ENCODE measurements at regions of chr13 and their contacts with region 1.

Region 1: GRCh38 chr13:95185851-95186250 is 115.4 kb downstream of the ABCC4 start:
- DNase-seq: no peak
- H3K4me3 ChIP-seq: no peak overlapping the region
- H3K27ac ChIP-seq: no peak overlapping the region
- H3K4me1 ChIP-seq: peaks cover 6 to 8% of the 10 kb centered on the region in 2 donors
- H3K27me3 ChIP-seq: no peaks in the 10 kb centered on the region
- CTCF ChIP-seq: no peak
- POLR2A ChIP-seq: no peak

Region 2: GRCh38 chr13:94154389-94154788 is 1031.5 kb before region 1 on chr13:
- intact Hi-C with region 1: no loop called
- DNase-seq: peak; percentile 64 to 91 (median 88)
- H3K4me3 ChIP-seq: no peak overlapping the region
- H3K27ac ChIP-seq: no peak overlapping the region
- H3K4me1 ChIP-seq: no peaks in the 10 kb centered on the region
- H3K27me3 ChIP-seq: no peaks in the 10 kb centered on the region
- CTCF ChIP-seq: no peak
- POLR2A ChIP-seq: no peak

Region 3: GRCh38 chr13:95382411-95382810 is 196.6 kb after region 1 on chr13:
- intact Hi-C with region 1: loop called (anchors 5 kb)
- DNase-seq: no peak
- H3K4me3 ChIP-seq: no peak overlapping the region
- H3K27ac ChIP-seq: no peak overlapping the region
- H3K4me1 ChIP-seq: no peaks in the 10 kb centered on the region
- H3K27me3 ChIP-seq: no peaks in the 10 kb centered on the region
- CTCF ChIP-seq: no peak
- POLR2A ChIP-seq: no peak